AG04449 (cell line): ENCODE measurements at regions of chr1 and their contacts with region 1.

Region 1: GRCh38 chr1:162612606-162613400 is 19.5 kb upstream of the DDR2 start:
- DNase-seq: no peak
- H3K4me3 ChIP-seq: no peak overlapping the region
- CTCF ChIP-seq: no peak

Region 2: DNA sequence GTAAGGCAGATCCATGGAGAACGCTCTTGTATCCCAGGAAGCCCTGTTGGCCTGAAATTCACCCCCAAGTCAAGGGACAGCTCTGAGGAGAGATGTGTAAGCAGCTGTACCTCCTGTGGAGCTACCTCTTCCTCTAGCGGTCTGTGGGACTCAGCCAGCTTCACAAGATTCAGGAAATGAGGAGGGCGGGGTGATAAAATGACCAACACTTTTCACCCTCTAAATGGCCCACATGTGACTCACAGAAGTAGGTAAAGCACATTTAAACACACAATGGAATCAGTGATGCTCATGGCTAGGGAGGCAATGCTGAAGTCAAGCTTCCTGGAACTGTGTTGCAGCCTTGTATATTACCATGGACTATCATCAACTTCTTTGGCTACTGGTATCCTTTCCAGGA is 200.8 kb before region 1 on chr1 and contains the start of gene SH2D1B:
- CTCF ChIA-PET with region 1: no interaction called
- POLR2A ChIA-PET with region 1: no interaction called
- DNase-seq: no peak
- H3K4me3 ChIP-seq: no peak within 1 kb of the TSS
- CTCF ChIP-seq: no peak

Region 3: DNA sequence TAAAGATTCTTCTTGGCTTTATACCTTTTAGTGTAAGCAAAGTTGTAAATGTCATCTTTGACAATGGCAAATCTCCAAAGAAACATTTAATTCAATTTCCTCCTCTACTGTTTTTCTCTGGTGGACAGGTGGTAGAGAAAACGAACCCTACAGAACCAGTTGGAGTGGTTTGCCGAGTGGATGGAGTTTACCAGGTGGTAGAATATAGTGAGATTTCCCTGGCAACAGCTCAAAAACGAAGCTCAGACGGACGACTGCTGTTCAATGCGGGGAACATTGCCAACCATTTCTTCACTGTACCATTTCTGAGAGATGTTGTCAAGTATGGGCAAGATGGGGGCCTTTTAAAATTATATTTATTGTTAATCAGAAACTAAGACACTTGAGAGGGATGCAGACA is 25.5 kb before region 1 on chr1:
- CTCF ChIA-PET with region 1: interaction called, 11 read pairs
- POLR2A ChIA-PET with region 1: no interaction called
- DNase-seq: no peak
- H3K4me3 ChIP-seq: no peak overlapping the region
- CTCF ChIP-seq: no peak

Region 4: DNA sequence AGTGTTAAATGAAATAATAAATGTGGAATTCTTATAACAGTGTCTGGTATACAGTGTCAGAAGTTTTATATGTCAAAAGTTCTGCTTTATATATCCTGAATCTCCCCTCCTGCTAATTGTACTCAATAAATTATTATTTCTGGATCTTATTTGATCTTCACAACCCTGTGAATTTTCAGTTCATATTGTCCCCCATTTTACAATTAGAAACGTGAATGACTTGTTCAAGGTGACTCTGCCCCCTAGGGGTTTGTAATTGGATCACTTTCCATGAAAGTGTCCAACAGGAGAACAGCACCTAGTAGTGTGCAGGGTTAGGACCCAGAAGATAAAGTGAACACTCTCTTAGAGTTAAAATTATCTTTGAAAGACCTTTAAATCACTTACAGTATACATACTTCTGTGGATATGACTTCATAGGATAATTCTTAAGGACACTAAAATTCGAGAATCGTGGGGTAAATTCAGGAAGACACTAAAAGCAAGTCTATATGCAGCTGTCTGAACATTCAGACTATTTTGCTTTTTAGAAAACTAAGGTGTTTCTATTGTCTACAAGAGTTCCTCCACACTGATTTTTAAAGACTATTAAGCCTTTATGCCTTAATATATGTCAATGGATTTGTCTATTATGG is 15.0 kb after region 1 on chr1:
- CTCF ChIA-PET with region 1: interaction called, 102 read pairs
- POLR2A ChIA-PET with region 1: interaction called, 4 read pairs
- DNase-seq: no peak
- H3K4me3 ChIP-seq: no peak overlapping the region
- CTCF ChIP-seq: peak; percentile 24

Region 5: DNA sequence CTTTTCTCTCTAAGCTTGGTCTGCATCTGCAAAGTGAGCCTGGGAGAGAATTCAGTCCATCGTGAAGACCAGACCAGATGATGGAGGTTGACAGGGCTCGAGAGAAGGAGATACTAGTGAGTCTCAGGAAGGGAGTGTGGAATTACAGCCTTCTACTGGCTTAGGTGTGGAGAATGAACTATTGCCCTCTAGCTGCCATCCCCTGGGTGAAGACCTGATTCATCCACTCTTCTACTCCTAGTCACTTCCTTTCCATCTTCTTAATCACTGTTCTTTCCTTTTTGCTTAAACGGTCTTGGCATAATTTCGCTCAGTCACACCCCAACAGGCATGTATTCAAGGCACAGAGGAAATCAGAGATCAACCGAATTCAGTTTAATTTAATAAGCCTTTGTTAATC is 143.7 kb after region 1 on chr1:
- CTCF ChIA-PET with region 1: interaction called, 22 read pairs
- POLR2A ChIA-PET with region 1: no interaction called
- DNase-seq: no peak
- H3K4me3 ChIP-seq: no peak overlapping the region
- CTCF ChIP-seq: no peak